ENCODE measurements at regions of chr3 and their contacts with region 1.

Region 1: DNA sequence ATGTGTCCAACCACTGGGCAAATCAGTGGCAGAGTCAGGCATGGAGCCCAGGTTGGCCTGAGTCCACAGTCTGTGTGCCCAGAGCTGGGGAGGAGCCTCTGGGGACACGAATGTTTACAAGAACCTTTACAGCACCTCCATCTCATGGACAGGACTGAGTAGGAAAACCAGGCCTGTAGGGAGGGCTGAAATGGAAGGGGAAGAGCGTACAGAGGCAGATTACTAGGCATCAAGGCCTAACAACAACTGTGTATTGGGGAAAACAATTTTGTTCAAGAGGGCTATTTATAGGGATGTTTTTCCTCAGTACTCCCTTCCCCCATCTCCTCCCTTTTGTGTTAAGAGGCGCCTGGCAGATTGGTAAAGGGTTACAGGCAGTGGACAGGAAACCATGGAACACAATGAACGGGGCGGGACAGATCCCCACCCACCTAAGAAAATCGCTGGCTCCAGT is 15.1 kb upstream of the ARHGAP31 start:
- DNase-seq: no peak
- H3K4me3 ChIP-seq: no peak overlapping the region
- H3K27ac ChIP-seq: peak overlapping the region; percentile 62 to 66
- H3K4me1 ChIP-seq: peaks cover 0 to 2% of the 10 kb centered on the region in 2 donors
- H3K27me3 ChIP-seq: no peaks in the 10 kb centered on the region
- CTCF ChIP-seq: no peak

Region 2: GRCh38 chr3:119310071-119310470 is 30.9 kb after region 1 on chr3:
- intact Hi-C with region 1: no loop called
- DNase-seq: no peak
- H3K4me3 ChIP-seq: no peak overlapping the region
- H3K27ac ChIP-seq: no peak overlapping the region
- H3K4me1 ChIP-seq: no peaks in the 10 kb centered on the region
- H3K27me3 ChIP-seq: no peaks in the 10 kb centered on the region
- CTCF ChIP-seq: no peak

Region 3: DNA sequence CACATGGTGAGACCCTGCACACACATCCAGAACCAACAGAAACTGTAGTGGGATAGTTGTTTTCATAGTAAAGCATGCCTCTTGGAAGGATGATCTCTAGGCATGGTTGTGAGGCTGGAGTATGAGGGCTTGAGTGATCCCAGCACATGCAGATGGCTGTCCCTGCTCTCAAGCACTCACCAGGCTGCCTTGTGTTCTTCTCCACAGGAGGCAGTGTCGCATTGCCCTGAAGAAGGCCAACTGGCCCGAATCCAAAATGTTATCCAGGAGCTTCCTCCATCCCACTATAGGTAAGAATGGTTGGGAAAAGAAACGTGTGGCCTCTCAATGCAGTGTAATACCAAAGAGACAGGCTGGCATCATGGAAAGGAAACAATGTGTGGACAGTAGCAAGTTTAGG is 101.6 kb after region 1 on chr3:
- intact Hi-C with region 1: loop called (anchors 10 kb)
- DNase-seq: no peak
- H3K4me3 ChIP-seq: no peak overlapping the region
- H3K27ac ChIP-seq: no peak overlapping the region
- H3K4me1 ChIP-seq: no peaks in the 10 kb centered on the region
- H3K27me3 ChIP-seq: no peaks in the 10 kb centered on the region
- CTCF ChIP-seq: no peak